CD8-positive, alpha-beta T cell (primary cell): ENCODE measurements at regions of chr19 and their contacts with region 1.

Region 1: DNA sequence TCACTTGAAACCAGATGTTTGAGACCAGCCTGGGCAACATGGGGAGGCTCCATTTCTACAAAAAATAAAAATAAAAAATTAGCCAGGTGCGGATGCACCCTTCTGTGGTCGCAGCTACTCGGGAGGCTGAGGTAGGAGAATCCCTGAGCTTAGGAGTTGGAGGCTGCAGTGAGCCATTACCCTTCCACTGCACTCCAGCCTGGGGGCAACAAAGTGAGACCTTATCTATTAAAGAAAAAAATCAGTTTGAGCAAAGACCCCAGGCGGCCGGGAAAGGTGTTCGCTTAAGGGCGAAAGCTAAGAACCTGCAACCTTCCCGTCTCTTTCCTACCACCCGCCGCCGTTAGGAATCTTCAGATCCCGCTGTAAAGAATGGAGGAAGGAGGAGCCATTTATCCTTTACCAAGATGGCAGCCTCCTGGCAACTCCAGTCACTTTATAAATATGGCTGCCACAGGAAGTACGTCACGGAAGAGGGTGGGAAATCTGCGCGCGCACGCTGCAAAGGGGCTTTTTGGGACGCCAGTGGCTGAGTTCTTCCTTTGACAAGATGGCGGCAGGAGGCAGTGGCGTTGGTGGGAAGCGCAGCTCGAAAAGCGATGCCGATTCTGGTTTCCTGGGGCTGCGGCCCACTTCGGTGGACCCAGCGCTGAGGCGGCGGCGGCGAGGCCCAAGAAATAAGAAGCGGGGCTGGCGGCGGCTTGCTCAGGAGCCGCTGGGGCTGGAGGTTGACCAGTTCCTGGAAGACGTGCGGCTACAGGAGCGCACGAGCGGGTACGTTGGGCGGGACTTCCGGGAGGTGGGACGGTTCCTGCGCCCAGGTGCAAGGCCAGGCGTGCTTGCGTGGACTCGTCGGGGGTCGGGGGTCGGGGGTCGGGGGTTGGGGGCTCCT is at the start of gene NOP53:
- DNase-seq: peak; percentile 91 to 99 (median 97)
- ATAC-seq: peak; percentile 82
- H3K4me3 ChIP-seq: peak within 1 kb of the TSS; percentile 64 to 78
- H3K4me3 Mint-ChIP-seq: peak within 1 kb of the TSS; percentile 99
- H3K27ac ChIP-seq: peak within 1 kb of the TSS; percentile 85 to 96
- H3K27ac Mint-ChIP-seq: peak within 1 kb of the TSS; percentile 100
- H3K4me1 ChIP-seq: peaks cover 60% of the 10 kb centered on the region
- H3K4me1 Mint-ChIP-seq: peaks cover 39% of the 10 kb centered on the region
- H3K27me3 ChIP-seq: no peaks in the 10 kb centered on the region
- H3K27me3 Mint-ChIP-seq: no peaks in the 10 kb centered on the region
- CTCF ChIP-seq: no peak
- total RNA-seq, gene NOP53: 924 to 926 TPM

Region 2: DNA sequence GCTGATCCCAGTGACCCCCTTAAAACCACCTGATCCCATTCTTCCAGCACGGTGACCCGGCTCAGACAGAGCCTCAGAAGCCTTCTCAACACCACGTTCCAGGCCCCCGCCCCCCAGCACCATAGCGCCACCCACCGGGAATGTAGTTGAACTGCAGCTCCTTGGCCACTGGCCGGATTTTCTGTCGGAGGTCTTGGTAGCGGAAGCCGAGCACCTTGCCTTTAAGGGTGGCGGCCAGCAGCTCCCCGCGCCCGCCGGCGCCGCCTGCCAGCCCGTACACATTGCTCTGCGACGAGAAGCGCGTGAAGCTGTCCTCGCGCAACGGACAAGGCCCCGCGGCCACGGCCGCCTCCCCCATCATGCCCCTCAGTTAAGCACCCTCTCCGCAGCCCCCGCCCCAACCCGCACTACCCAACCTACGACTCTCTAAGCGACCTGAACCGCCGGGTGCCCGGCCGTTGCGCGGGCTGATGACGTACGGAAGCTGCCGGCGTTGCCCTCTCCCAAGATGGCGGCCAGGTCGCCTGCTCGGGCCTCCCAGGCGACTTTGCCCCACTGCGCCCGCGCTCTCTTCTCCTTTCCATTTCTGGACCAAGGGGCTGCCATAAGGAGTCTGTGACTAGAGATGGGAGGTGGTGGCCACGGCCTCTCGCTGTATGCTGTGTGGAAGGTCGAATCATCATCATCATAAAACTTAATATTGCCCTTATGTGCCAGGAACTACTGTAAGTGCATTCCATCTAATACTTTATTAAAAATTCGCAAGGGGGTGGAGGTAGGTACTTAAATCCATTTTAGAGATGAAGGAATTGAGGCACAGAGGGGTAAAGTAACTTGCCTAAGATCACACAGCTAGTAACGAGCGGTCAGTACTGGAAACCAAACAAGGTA is 261.2 kb before region 1 on chr19 and contains the start of gene KPTN:
- CTCF ChIA-PET with region 1: no interaction called
- POLR2A ChIA-PET with region 1: no interaction called
- intact Hi-C with region 1: loop called (anchors 1 kb)
- DNase-seq: peak; percentile 76 to 94 (median 87)
- ATAC-seq: peak; percentile 81
- H3K4me3 ChIP-seq: peak within 1 kb of the TSS; percentile 72 to 74
- H3K4me3 Mint-ChIP-seq: peak within 1 kb of the TSS; percentile 98
- H3K27ac ChIP-seq: peak within 1 kb of the TSS; percentile 75 to 94
- H3K27ac Mint-ChIP-seq: peak within 1 kb of the TSS; percentile 98
- H3K4me1 ChIP-seq: peaks cover 38% of the 10 kb centered on the region
- H3K4me1 Mint-ChIP-seq: peaks cover 45% of the 10 kb centered on the region
- H3K27me3 ChIP-seq: no peaks in the 10 kb centered on the region
- H3K27me3 Mint-ChIP-seq: no peaks in the 10 kb centered on the region
- CTCF ChIP-seq: peak; percentile 69
- total RNA-seq, gene KPTN: 5.4 to 5.9 TPM

Region 3: GRCh38 chr19:47608074-47608918 is 137.0 kb before region 1 on chr19:
- CTCF ChIA-PET with region 1: no interaction called
- POLR2A ChIA-PET with region 1: no interaction called
- intact Hi-C with region 1: loop called in 1 of 2 experiments (anchors 2 kb)
- DNase-seq: peak; percentile 93 to 98 (median 95)
- ATAC-seq: peak; percentile 87
- H3K4me3 ChIP-seq: peak overlapping the region; percentile 84 to 99
- H3K4me3 Mint-ChIP-seq: peak overlapping the region; percentile 84
- H3K27ac ChIP-seq: peak overlapping the region; percentile 82 to 85
- H3K27ac Mint-ChIP-seq: peak overlapping the region; percentile 77
- H3K4me1 ChIP-seq: peaks cover 17% of the 10 kb centered on the region
- H3K4me1 Mint-ChIP-seq: peaks cover 29% of the 10 kb centered on the region
- H3K27me3 ChIP-seq: no peaks in the 10 kb centered on the region
- H3K27me3 Mint-ChIP-seq: no peaks in the 10 kb centered on the region
- CTCF ChIP-seq: no peak

Region 4: DNA sequence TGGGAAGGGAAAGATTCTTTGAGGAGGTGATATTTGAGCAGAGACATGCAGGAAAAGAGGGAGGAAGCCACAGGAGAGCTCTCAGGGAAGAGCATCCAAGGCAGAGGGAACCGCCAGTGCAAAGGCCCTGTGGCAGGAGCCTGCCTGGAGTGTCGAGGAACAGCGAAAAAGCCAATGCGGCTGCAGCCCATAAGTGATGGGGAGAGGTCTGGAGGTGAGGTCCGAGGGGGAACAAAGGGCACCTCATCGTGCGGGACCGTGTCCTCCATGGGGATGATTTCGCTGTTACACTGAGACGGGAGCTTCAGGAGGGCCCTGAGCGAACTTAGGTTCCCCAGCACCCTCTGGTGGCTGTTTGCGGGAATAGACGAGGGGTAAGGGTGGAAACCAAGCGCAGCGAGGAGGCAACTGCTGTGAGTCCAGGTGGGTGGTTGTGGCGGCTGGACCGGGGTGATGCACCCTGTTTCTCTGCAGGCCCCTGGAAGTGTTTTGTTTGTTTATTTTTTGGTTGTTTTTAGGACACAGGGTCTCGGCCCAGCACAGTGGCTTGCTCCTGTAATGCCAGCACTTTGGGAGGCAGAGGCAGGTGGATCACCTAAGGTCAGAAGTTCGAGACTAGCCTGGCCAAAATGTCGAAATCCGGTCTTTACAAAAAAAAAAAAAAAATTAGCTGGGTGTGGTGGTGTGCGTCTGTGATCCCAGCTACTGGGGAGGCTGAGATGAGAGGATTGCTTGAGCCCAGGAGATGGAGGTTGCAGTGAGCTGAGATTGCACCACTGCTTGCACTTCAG is 37.9 kb before region 1 on chr19:
- CTCF ChIA-PET with region 1: interaction called, 24 read pairs
- POLR2A ChIA-PET with region 1: no interaction called
- intact Hi-C with region 1: no loop called
- DNase-seq: peak; percentile 49 to 83 (median 74)
- ATAC-seq: peak; percentile 94
- H3K4me3 ChIP-seq: no peak overlapping the region
- H3K4me3 Mint-ChIP-seq: no peak overlapping the region
- H3K27ac ChIP-seq: no peak overlapping the region
- H3K27ac Mint-ChIP-seq: no peak overlapping the region
- H3K4me1 ChIP-seq: no peaks in the 10 kb centered on the region
- H3K4me1 Mint-ChIP-seq: peaks cover 2% of the 10 kb centered on the region
- H3K27me3 ChIP-seq: peaks cover 4 to 7% of the 10 kb centered on the region in 2 experiments
- H3K27me3 Mint-ChIP-seq: peaks cover 16% of the 10 kb centered on the region
- CTCF ChIP-seq: peak; percentile 72

Region 5: GRCh38 chr19:47778089-47778953 is 33.1 kb after region 1 on chr19 and contains the start of gene SELENOW:
- CTCF ChIA-PET with region 1: no interaction called
- POLR2A ChIA-PET with region 1: interaction called, 5 read pairs
- intact Hi-C with region 1: loop called (anchors 1 kb)
- DNase-seq: peak; percentile 55 to 91 (median 76)
- ATAC-seq: peak; percentile 93
- H3K4me3 ChIP-seq: peak within 1 kb of the TSS; percentile 81 to 95
- H3K4me3 Mint-ChIP-seq: peak within 1 kb of the TSS; percentile 93
- H3K27ac ChIP-seq: peak within 1 kb of the TSS; percentile 87 to 99
- H3K27ac Mint-ChIP-seq: peak within 1 kb of the TSS; percentile 94
- H3K4me1 ChIP-seq: peaks cover 22% of the 10 kb centered on the region
- H3K4me1 Mint-ChIP-seq: peaks cover 25% of the 10 kb centered on the region
- H3K27me3 ChIP-seq: no peaks in the 10 kb centered on the region
- H3K27me3 Mint-ChIP-seq: no peaks in the 10 kb centered on the region
- CTCF ChIP-seq: no peak
- total RNA-seq, gene SELENOW: 64.9 to 68.1 TPM

Region 6: DNA sequence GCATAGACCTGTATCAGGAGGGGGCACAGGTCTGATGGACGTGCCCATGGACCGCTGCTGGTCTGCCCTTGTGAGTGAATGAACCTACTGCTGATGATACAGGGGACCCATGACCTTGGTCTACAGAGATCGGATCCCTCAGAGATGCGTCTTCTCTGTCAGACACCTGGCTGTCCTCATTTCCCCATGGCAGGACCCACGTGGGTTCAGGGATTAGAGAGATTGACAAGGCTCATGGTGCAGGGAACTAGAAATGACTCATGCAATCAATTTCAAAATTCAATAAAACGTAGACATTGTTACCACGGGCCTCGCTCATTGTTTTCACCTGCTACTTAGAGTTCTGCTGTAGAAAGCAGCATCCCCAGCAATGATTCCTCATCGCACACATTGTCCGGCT is 60.1 kb after region 1 on chr19:
- CTCF ChIA-PET with region 1: no interaction called
- POLR2A ChIA-PET with region 1: no interaction called
- intact Hi-C with region 1: no loop called
- DNase-seq: no peak
- ATAC-seq: no peak
- H3K4me3 ChIP-seq: no peak overlapping the region
- H3K4me3 Mint-ChIP-seq: no peak overlapping the region
- H3K27ac ChIP-seq: no peak overlapping the region
- H3K27ac Mint-ChIP-seq: no peak overlapping the region
- H3K4me1 ChIP-seq: no peaks in the 10 kb centered on the region
- H3K4me1 Mint-ChIP-seq: no peaks in the 10 kb centered on the region
- H3K27me3 ChIP-seq: no peaks in the 10 kb centered on the region
- H3K27me3 Mint-ChIP-seq: peaks cover 4% of the 10 kb centered on the region
- CTCF ChIP-seq: no peak